ENCODE measurements at regions of chr1 and their contacts with region 1.

Region 1: GRCh38 chr1:111507411-111508201 is 4.2 kb upstream of the ADORA3 start:
- DNase-seq: peak; percentile 83
- ATAC-seq: peak; percentile 76
- H3K4me3 Mint-ChIP-seq: peak overlapping the region; percentile 49
- H3K27ac Mint-ChIP-seq: peak overlapping the region; percentile 94
- H3K4me1 Mint-ChIP-seq: peaks cover 59% of the 10 kb centered on the region
- H3K27me3 Mint-ChIP-seq: no peaks in the 10 kb centered on the region
- CTCF ChIP-seq: no peak

Region 2: GRCh38 chr1:111318523-111318922 is 189.1 kb before region 1 on chr1:
- CTCF ChIA-PET with region 1: no interaction called
- POLR2A ChIA-PET with region 1: no interaction called
- intact Hi-C with region 1: no loop called
- DNase-seq: no peak
- ATAC-seq: no peak
- H3K4me3 Mint-ChIP-seq: no peak overlapping the region
- H3K27ac Mint-ChIP-seq: no peak overlapping the region
- H3K4me1 Mint-ChIP-seq: peaks cover 12% of the 10 kb centered on the region
- H3K27me3 Mint-ChIP-seq: no peaks in the 10 kb centered on the region
- CTCF ChIP-seq: no peak

Region 3: GRCh38 chr1:111481387-111482221 is 26.0 kb before region 1 on chr1:
- CTCF ChIA-PET with region 1: interaction called, 99 read pairs
- POLR2A ChIA-PET with region 1: interaction called, 8 read pairs
- intact Hi-C with region 1: no loop called
- DNase-seq: peak; percentile 77
- ATAC-seq: peak; percentile 67
- H3K4me3 Mint-ChIP-seq: no peak overlapping the region
- H3K27ac Mint-ChIP-seq: no peak overlapping the region
- H3K4me1 Mint-ChIP-seq: peaks cover 29% of the 10 kb centered on the region
- H3K27me3 Mint-ChIP-seq: no peaks in the 10 kb centered on the region
- CTCF ChIP-seq: peak; percentile 52

Region 4: GRCh38 chr1:111592389-111593361 is 85.1 kb after region 1 on chr1:
- CTCF ChIA-PET with region 1: interaction called, 46 read pairs
- POLR2A ChIA-PET with region 1: interaction called, 17 read pairs
- intact Hi-C with region 1: no loop called
- DNase-seq: peak; percentile 100
- ATAC-seq: peak; percentile 90
- H3K4me3 Mint-ChIP-seq: peak overlapping the region; percentile 57
- H3K27ac Mint-ChIP-seq: peak overlapping the region; percentile 91
- H3K4me1 Mint-ChIP-seq: peaks cover 76% of the 10 kb centered on the region
- H3K27me3 Mint-ChIP-seq: no peaks in the 10 kb centered on the region
- CTCF ChIP-seq: no peak

Region 5: DNA sequence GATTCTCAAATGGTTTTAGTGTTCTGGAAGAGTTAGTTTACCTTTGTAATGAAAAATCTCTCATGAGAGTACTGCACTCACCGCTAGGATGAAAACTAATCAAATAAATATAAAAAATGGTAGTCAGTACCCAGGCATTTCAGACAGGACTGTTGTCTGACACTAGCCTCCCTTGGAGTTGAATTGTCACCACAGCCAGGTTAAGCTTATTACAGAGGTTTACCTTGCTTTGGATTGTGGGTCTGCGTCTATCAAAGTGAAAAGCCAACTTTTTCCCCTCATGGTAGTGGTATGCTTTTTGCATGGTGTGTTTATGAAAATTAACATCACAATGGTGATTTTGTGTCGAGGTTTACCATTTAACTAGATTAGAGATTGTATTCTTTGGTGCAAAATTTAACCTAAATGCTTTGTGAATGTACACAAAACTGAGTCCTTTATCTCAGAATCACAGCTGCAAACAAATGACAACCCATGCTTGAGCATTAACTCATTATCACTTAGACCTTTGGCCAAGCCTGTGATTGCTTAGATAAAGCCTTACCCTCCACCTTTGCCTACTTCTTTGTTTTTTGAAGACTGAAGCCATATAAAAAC is 132.1 kb after region 1 on chr1:
- CTCF ChIA-PET with region 1: interaction called, 10 read pairs
- POLR2A ChIA-PET with region 1: no interaction called
- intact Hi-C with region 1: no loop called
- DNase-seq: no peak
- ATAC-seq: no peak
- H3K4me3 Mint-ChIP-seq: no peak overlapping the region
- H3K27ac Mint-ChIP-seq: no peak overlapping the region
- H3K4me1 Mint-ChIP-seq: peaks cover 72% of the 10 kb centered on the region
- H3K27me3 Mint-ChIP-seq: no peaks in the 10 kb centered on the region
- CTCF ChIP-seq: no peak

Region 6: DNA sequence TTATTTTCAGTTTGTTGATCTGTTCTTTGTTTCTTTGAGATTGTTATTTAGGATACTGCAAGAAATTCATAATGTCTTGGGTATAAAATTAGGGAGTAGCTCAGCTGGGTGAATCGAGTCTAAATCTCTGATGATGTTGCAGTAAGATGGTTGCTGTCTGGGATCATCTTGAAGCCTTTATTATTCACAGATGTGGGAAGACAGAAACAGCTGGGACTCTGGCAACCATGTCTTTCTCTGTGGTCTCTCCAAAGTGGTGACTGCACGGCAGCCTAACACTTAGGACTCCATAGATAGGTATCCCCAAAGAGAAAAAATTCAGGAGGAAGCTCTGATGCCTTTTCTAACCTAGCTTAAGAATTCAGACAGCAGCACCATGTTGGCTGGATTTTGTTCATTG is 164.7 kb after region 1 on chr1:
- CTCF ChIA-PET with region 1: interaction called, 10 read pairs
- POLR2A ChIA-PET with region 1: interaction called, 4 read pairs
- intact Hi-C with region 1: no loop called
- DNase-seq: no peak
- ATAC-seq: no peak
- H3K4me3 Mint-ChIP-seq: no peak overlapping the region
- H3K27ac Mint-ChIP-seq: peak overlapping the region; percentile 64
- H3K4me1 Mint-ChIP-seq: peaks cover 69% of the 10 kb centered on the region
- H3K27me3 Mint-ChIP-seq: no peaks in the 10 kb centered on the region
- CTCF ChIP-seq: no peak

Region 7: DNA sequence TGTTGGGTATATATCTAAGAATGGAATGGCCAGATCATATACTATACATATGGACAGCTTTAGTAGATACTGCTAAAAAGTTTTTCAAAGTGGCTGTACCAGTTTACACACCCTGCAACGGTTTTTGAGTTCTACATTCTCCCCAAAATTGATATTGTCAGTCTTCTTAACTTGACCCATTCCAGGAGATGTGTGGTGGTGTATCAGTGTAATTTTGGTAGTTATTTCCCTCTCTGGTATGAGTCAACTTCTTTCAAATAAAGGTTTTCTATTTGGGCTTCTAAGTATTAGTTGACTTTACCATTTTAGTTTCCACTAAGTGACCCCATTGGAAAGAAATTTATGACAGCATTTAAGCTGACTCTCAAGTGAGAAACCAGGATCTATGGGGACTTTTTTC is 202.4 kb after region 1 on chr1:
- CTCF ChIA-PET with region 1: interaction called, 47 read pairs
- POLR2A ChIA-PET with region 1: interaction called, 3 read pairs
- intact Hi-C with region 1: no loop called
- DNase-seq: no peak
- ATAC-seq: peak; percentile 48
- H3K4me3 Mint-ChIP-seq: no peak overlapping the region
- H3K27ac Mint-ChIP-seq: peak overlapping the region; percentile 75
- H3K4me1 Mint-ChIP-seq: peaks cover 58% of the 10 kb centered on the region
- H3K27me3 Mint-ChIP-seq: no peaks in the 10 kb centered on the region
- CTCF ChIP-seq: no peak

Region 8: DNA sequence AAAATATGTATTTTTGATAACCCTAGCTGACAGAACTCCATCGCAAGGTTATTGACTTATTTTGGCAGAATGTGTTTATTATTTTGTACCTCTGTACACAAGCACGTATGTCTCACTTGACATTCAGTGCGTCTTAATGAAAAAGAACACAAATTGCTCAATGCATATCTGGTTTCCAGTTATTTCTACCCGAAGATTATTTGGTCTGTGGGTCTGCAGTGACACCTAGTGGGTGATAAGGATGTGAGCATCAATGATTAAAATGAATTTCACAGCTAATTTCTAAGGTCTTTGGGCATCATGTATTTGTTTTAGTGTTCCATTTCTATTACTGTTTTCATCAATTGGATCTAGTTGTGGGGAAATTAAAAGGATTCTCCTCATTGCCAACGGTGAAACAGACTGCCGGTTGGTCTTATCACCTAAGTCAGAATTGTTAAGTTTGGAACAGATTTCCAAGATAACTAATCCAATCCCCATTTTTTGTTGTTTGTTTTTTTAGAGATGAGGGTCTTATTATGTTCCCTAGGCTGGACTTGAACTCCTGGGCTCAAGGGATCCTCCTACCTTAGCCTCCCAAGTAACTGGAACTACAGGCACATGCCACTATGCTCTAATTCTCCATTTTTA is 262.0 kb after region 1 on chr1:
- CTCF ChIA-PET with region 1: interaction called, 35 read pairs
- POLR2A ChIA-PET with region 1: no interaction called
- intact Hi-C with region 1: no loop called
- DNase-seq: peak; percentile 66
- ATAC-seq: peak; percentile 55
- H3K4me3 Mint-ChIP-seq: no peak overlapping the region
- H3K27ac Mint-ChIP-seq: no peak overlapping the region
- H3K4me1 Mint-ChIP-seq: peaks cover 16% of the 10 kb centered on the region
- H3K27me3 Mint-ChIP-seq: no peaks in the 10 kb centered on the region
- CTCF ChIP-seq: peak; percentile 78

Region 9: DNA sequence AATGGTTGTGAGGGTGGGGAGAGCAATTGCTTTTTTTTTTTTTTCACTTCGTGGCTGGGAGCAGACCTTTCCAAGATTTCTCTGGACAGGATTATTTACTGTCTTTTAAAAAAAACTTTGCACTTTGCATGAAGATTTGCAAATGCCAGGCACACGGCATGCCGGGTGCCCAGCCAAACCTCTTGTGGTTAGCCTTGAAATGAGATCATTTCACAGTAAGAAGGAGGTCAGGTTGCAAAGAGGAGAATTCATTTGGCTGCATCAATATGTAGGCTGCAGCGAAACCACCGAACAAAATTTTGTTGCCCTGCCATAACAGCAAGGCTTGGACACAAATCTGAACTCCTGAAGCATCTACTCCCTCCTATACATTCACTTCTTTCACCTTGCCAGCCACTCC is 518.4 kb after region 1 on chr1:
- CTCF ChIA-PET with region 1: no interaction called
- POLR2A ChIA-PET with region 1: no interaction called
- intact Hi-C with region 1: no loop called
- DNase-seq: no peak
- ATAC-seq: no peak
- H3K4me3 Mint-ChIP-seq: no peak overlapping the region
- H3K27ac Mint-ChIP-seq: no peak overlapping the region
- H3K4me1 Mint-ChIP-seq: no peaks in the 10 kb centered on the region
- H3K27me3 Mint-ChIP-seq: peaks cover 6% of the 10 kb centered on the region
- CTCF ChIP-seq: no peak

Region 10: GRCh38 chr1:112371775-112372174 is 864.2 kb after region 1 on chr1:
- CTCF ChIA-PET with region 1: no interaction called
- POLR2A ChIA-PET with region 1: no interaction called
- intact Hi-C with region 1: no loop called
- DNase-seq: no peak
- ATAC-seq: no peak
- H3K4me3 Mint-ChIP-seq: no peak overlapping the region
- H3K27ac Mint-ChIP-seq: no peak overlapping the region
- H3K4me1 Mint-ChIP-seq: peaks cover 3% of the 10 kb centered on the region
- H3K27me3 Mint-ChIP-seq: peaks cover 31% of the 10 kb centered on the region
- CTCF ChIP-seq: no peak